ENCODE measurements at regions of chr16 and their contacts with region 1.

Region 1: GRCh38 chr16:74100395-74101322 is 196.0 kb upstream of the PSMD7 start:
- DNase-seq: no peak
- H3K4me3 ChIP-seq: no peak overlapping the region
- H3K27ac ChIP-seq: no peak overlapping the region
- H3K4me1 ChIP-seq: peaks cover 17% of the 10 kb centered on the region
- H3K27me3 ChIP-seq: no peaks in the 10 kb centered on the region
- CTCF ChIP-seq: no peak

Region 2: GRCh38 chr16:74034862-74035261 is 65.8 kb before region 1 on chr16:
- CTCF ChIA-PET with region 1: no interaction called
- POLR2A ChIA-PET with region 1: no interaction called
- intact Hi-C with region 1: loop called (anchors 5 kb)
- DNase-seq: peak; percentile 49
- H3K4me3 ChIP-seq: no peak overlapping the region
- H3K27ac ChIP-seq: no peak overlapping the region
- H3K4me1 ChIP-seq: no peaks in the 10 kb centered on the region
- H3K27me3 ChIP-seq: no peaks in the 10 kb centered on the region
- CTCF ChIP-seq: peak; percentile 58

Region 3: DNA sequence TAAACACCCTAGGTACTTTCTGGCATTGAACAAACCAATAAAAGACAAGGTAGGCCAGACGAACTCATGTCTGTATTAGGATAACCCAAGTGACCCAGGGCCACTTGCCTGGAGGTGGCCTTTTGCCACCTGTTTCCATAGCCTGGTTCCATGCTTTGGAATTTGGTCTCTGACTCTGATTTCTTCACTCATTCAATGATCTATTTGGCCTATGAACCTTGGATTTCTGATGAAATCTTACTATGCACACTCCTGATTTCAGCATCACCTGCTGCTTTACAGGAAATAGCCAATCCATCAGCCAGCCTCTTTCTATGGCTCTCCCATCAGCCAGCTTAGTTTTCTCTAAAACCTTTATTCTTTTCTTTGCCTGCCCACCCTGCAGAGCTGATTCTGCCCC is 53.1 kb after region 1 on chr16:
- CTCF ChIA-PET with region 1: no interaction called
- POLR2A ChIA-PET with region 1: no interaction called
- intact Hi-C with region 1: loop called (anchors 5 kb)
- DNase-seq: no peak
- H3K4me3 ChIP-seq: no peak overlapping the region
- H3K27ac ChIP-seq: no peak overlapping the region
- H3K4me1 ChIP-seq: no peaks in the 10 kb centered on the region
- H3K27me3 ChIP-seq: no peaks in the 10 kb centered on the region
- CTCF ChIP-seq: no peak